ENCODE measurements at regions of chr5 and their contacts with region 1.

Region 1: DNA sequence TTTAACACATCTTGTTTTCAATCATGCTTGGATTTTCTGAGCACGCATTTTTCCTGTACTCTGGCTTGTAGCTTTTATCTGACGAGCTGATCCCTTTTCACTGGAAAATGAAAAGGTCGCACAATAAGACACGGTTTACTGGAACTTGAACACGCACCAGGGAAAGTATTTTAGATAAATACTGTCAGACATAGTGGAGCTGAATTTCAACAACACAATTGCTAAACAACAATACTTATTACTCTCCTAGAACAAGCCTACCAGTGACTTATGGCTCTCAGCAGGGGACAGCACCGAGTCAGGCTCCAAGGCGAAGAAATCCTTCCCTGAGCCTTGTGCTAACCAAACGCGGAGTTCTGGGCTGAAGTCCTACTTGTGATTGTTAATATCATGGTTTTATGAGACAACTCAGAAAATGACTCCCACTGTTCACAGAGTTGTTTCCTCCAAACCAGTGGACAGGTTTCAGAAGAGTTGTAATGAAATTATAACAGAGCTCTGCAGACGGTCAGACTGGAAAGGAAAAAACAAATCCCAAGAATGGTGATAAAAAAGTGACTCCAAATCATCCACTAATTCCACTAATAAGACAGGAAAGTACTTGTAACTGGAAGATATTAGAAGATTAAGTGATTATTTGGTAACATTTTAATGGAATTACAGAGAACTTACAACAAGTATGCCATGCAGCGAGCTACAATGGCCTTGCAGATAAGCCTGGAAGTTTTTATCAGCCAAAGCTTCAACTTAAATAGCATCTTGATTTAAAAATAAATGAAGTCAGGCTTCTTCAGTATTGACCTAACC is 359.6 kb downstream of the EBF1 start:
- DNase-seq: peak in 1 of 2 donors; percentile 28
- ATAC-seq: peak in 7 of 8 donors; percentile 44 to 74 (median 63)
- H3K4me3 ChIP-seq: no peak overlapping the region
- H3K27ac ChIP-seq: peak overlapping the region in 6 of 10 donors; percentile 18 to 58 (median 28)
- H3K4me1 ChIP-seq: peaks cover 0 to 32% (median 7%) of the 10 kb centered on the region in 9 donors
- H3K27me3 ChIP-seq: no peaks in the 10 kb centered on the region
- CTCF ChIP-seq: peak in 8 of 9 donors; percentile 11 to 62 (median 40)

Region 2: GRCh38 chr5:158770506-158770905 is 30.4 kb after region 1 on chr5:
- intact Hi-C with region 1: loop called in 1 of 10 experiments (anchors 2 kb)
- DNase-seq: no peak
- ATAC-seq: peak in 1 of 8 donors; percentile 51
- H3K4me3 ChIP-seq: no peak overlapping the region
- H3K27ac ChIP-seq: peak overlapping the region in 4 of 10 donors; percentile 3 to 33 (median 10)
- H3K4me1 ChIP-seq: peaks cover 0 to 58% (median 31%) of the 10 kb centered on the region in 9 donors
- H3K27me3 ChIP-seq: no peaks in the 10 kb centered on the region
- CTCF ChIP-seq: peak in 3 of 9 donors; percentile 12 to 21 (median 18)